HCT116 (cell line): ENCODE measurements at regions of chr20 and their contacts with region 1.

Region 1: GRCh38 chr20:4076671-4077070 is 61.3 kb upstream of the RNF24 start:
- DNase-seq: peak; percentile 76
- ATAC-seq: peak; percentile 79
- H3K4me3 ChIP-seq: no peak overlapping the region
- H3K27ac ChIP-seq: peak overlapping the region; percentile 46
- H3K4me1 ChIP-seq: peaks cover 14 to 22% of the 10 kb centered on the region in 2 experiments
- H3K27me3 ChIP-seq: no peaks in the 10 kb centered on the region; the same call in 1 of the 2 replicates
- CTCF ChIP-seq: no peak
- POLR2A ChIP-seq: no peak
- RAD21 ChIP-seq: peak; percentile 6; the same call in 1 of the 2 replicates

Region 2: GRCh38 chr20:3101737-3102574 is 974.7 kb before region 1 on chr20:
- CTCF ChIA-PET with region 1: no interaction called
- POLR2A ChIA-PET with region 1: no interaction called
- RAD21 ChIA-PET with region 1: no interaction called
- intact Hi-C with region 1: no loop called
- DNase-seq: no peak
- ATAC-seq: no peak
- H3K4me3 ChIP-seq: no peak overlapping the region
- H3K27ac ChIP-seq: no peak overlapping the region
- H3K4me1 ChIP-seq: no peaks in the 10 kb centered on the region
- H3K27me3 ChIP-seq: no peaks in the 10 kb centered on the region
- CTCF ChIP-seq: no peak
- POLR2A ChIP-seq: no peak
- RAD21 ChIP-seq: no peak

Region 3: DNA sequence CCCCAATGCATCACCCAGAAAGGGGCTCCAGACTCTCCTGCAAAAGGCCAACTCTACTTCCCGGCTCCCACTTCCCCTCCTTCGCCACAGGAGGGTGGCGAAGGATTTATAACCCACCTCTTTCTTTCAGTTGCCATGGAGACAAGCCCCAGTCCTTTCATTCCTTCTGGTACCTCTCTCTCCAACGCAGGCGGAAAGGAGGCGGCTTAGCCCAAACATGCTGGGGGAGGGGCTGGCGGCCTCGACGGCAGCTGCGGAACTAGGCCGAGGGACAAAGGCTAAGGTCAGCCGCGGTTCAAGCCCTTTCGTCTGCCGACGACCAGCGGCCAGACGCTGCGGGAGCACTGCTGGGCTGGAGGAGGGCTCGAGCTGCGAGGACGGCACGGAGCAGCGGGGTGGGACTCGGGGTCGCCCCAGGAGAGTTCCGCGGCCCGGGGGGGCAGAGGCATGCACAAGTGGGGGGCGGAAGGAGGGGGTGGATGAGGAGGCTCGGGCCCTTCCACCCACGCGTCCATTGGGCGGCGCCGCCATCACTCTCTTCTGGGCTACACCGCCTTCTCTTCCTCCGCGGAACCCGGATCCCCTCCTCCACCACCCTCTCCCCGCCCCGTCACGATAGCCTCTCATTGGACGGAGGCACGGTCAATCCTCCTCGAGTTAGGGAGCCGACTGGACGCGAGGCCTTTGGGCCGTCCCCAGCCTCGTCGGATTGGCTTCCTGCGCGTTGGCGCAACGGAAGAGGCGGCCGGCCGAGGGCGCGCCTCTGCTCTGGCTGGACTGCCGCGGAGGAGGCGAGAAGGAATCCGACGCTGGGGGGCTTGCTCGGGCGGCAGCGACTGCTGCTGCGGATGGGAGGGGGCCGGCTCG is 187.8 kb before region 1 on chr20 and contains the start of gene PANK2:
- CTCF ChIA-PET with region 1: no interaction called
- POLR2A ChIA-PET with region 1: no interaction called
- RAD21 ChIA-PET with region 1: no interaction called
- intact Hi-C with region 1: loop called (anchors 1 kb)
- DNase-seq: peak; percentile 99
- ATAC-seq: peak; percentile 94
- H3K4me3 ChIP-seq: peak within 1 kb of the TSS; percentile 68 to 83
- H3K27ac ChIP-seq: peak within 1 kb of the TSS; percentile 98
- H3K4me1 ChIP-seq: peaks cover 34 to 43% of the 10 kb centered on the region in 2 experiments
- H3K27me3 ChIP-seq: no peaks in the 10 kb centered on the region
- CTCF ChIP-seq: peak; percentile 32 to 48 (median 40); a peak in 4 of 6 replicates
- POLR2A ChIP-seq: peak; percentile 52
- RAD21 ChIP-seq: peak; percentile 59
- total RNA-seq, gene PANK2: 41.6 TPM

Region 4: GRCh38 chr20:4014031-4014474 is 62.6 kb before region 1 on chr20:
- CTCF ChIA-PET with region 1: interaction called, 6 read pairs
- POLR2A ChIA-PET with region 1: no interaction called
- RAD21 ChIA-PET with region 1: no interaction called
- intact Hi-C with region 1: loop called (anchors 1 kb)
- DNase-seq: peak; percentile 68
- ATAC-seq: peak; percentile 53
- H3K4me3 ChIP-seq: peak overlapping the region; percentile 71 to 82
- H3K27ac ChIP-seq: no peak overlapping the region
- H3K4me1 ChIP-seq: peaks cover 28 to 45% of the 10 kb centered on the region in 2 experiments; a peak in 3 of 4 replicates
- H3K27me3 ChIP-seq: no peaks in the 10 kb centered on the region
- CTCF ChIP-seq: peak; percentile 65 to 86 (median 74)
- POLR2A ChIP-seq: no peak
- RAD21 ChIP-seq: peak; percentile 89